GM12878 (cell line): ENCODE measurements at regions of chr12 and their contacts with region 1.

Region 1: DNA sequence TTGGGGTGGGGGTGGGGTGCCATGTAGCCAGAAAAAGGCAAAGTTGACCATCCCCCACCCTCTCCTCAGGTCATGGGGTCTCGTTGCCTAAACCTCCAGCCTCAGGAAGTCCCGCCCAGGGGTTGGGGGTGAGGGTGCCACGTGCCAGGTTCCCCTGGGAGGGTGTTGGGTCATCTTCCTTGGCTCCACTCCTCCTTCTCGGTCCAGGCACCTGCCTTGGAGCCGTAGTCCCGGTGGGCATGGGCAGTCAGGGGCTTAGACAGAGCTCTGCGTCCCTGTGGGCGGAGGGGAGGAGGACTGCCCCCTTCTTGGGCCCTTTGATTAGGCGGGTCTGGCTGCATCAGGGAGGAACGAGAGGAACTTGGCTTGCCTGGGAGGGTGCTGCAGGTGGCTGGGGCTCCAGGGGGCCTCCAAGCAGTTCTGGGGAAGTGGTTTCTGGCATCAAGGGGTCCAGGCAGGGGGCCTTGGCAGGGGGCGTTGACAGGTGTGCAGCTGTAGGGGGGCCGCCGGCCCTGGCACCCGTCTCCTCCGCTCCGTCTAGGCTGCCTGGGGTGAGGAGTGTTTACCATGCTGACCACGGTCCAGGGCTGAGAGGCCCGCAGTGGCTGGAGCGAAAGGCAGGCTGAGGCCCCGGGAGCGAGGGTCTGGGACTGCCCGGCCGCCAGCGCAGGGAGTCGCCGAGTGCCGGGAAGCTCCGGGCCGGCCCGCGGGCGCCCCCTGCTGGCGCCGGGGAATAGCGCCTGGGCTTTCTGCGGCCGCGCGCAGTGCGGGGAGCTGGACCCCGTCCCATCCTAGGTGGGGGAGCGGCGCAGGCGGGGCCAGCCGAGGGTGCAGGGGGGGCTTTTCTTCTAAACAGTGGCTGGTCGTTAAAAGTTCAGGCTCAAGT is 7.9 kb downstream of the SETD1B start:
- DNase-seq: no peak
- ATAC-seq: peak; percentile 96
- H3K4me3 ChIP-seq: peak overlapping the region; percentile 82
- H3K27ac ChIP-seq: peak overlapping the region; percentile 59; the same call in 1 of the 2 replicates
- H3K4me1 ChIP-seq: peaks cover 16% of the 10 kb centered on the region
- H3K27me3 ChIP-seq: no peaks in the 10 kb centered on the region
- CTCF ChIP-seq: peak; percentile 76 to 92 (median 88); a peak in 5 of 6 replicates
- EP300 ChIP-seq: no peak
- POLR2A ChIP-seq: no peak; the same call in 1 of the 2 replicates
- RAD21 ChIP-seq: peak; percentile 82

Region 2: DNA sequence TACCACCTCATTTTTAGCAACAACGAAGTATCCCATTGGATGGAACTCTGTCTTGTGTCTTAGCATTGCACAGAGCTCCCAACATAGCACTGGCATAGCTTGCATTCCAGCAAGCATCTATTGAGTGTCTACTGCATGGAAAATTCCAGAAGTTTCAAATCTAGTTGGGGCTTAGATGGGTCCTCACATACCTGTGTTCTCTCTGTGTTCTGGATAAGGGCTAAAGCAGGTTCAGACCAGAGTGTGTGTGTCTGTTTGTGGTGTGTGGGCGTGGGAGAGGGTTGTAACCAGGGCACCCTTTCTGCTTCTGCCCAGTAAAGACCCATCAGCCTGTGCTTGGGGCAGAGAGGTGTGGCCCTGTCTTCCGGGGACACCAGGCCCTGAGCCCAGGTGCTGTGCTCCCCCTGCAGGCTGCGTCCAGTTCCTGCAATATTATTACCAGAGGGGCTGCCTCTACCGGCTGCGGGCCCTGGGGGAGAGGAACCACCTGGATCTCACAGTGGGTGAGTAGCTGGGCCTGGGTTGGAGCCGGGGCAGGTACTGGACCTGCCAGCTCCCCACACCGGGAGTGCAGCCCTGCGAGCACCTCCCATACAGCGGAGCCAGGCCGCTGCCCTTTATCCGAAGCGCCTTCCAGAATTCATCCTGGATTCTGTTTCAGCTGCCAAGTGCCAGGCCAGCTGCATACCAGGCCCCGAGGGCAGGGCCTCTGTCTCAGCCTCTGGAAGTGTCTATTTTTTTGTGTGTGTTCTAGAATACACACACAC is 38.5 kb before region 1 on chr12:
- CTCF ChIA-PET with region 1: interaction called, 11 read pairs
- POLR2A ChIA-PET with region 1: no interaction called
- RAD21 ChIA-PET with region 1: interaction called, 3 read pairs
- SMC1A ChIA-PET with region 1: no interaction called
- in situ Hi-C with region 1: no loop called
- intact Hi-C with region 1: loop called (anchors 2 kb)
- DNase-seq: no peak
- ATAC-seq: peak; percentile 91
- H3K4me3 ChIP-seq: no peak overlapping the region
- H3K27ac ChIP-seq: no peak overlapping the region
- H3K4me1 ChIP-seq: peaks cover 7% of the 10 kb centered on the region; the same call in 1 of the 2 replicates
- H3K27me3 ChIP-seq: no peaks in the 10 kb centered on the region
- CTCF ChIP-seq: peak; percentile 92 to 95 (median 94); a peak in 5 of 6 replicates
- EP300 ChIP-seq: no peak
- POLR2A ChIP-seq: no peak
- RAD21 ChIP-seq: peak; percentile 97

Region 3: GRCh38 chr12:121786441-121786825 is 25.2 kb before region 1 on chr12:
- CTCF ChIA-PET with region 1: interaction called, 565 read pairs
- POLR2A ChIA-PET with region 1: interaction called, 155 read pairs
- RAD21 ChIA-PET with region 1: interaction called, 395 read pairs
- SMC1A ChIA-PET with region 1: interaction called, 226 read pairs
- in situ Hi-C with region 1: no loop called
- intact Hi-C with region 1: no loop called
- DNase-seq: no peak
- ATAC-seq: no peak
- H3K4me3 ChIP-seq: no peak overlapping the region
- H3K27ac ChIP-seq: peak overlapping the region; percentile 90
- H3K4me1 ChIP-seq: peaks cover 82% of the 10 kb centered on the region
- H3K27me3 ChIP-seq: no peaks in the 10 kb centered on the region
- CTCF ChIP-seq: no peak
- EP300 ChIP-seq: no peak
- POLR2A ChIP-seq: no peak
- RAD21 ChIP-seq: no peak

Region 4: GRCh38 chr12:121839106-121839992 is 27.7 kb after region 1 on chr12:
- CTCF ChIA-PET with region 1: interaction called, 15 read pairs
- POLR2A ChIA-PET with region 1: no interaction called
- RAD21 ChIA-PET with region 1: interaction called, 6 read pairs
- SMC1A ChIA-PET with region 1: interaction called, 7 read pairs
- in situ Hi-C with region 1: no loop called
- intact Hi-C with region 1: no loop called
- DNase-seq: peak; percentile 86
- ATAC-seq: peak; percentile 100
- H3K4me3 ChIP-seq: peak overlapping the region; percentile 78
- H3K27ac ChIP-seq: peak overlapping the region; percentile 58
- H3K4me1 ChIP-seq: peaks cover 3% of the 10 kb centered on the region; the same call in 1 of the 2 replicates
- H3K27me3 ChIP-seq: no peaks in the 10 kb centered on the region
- CTCF ChIP-seq: peak in 1 of 3 experiments; percentile 20; a peak in 1 of 6 replicates
- EP300 ChIP-seq: no peak
- POLR2A ChIP-seq: peak; percentile 77
- RAD21 ChIP-seq: no peak

Region 5: DNA sequence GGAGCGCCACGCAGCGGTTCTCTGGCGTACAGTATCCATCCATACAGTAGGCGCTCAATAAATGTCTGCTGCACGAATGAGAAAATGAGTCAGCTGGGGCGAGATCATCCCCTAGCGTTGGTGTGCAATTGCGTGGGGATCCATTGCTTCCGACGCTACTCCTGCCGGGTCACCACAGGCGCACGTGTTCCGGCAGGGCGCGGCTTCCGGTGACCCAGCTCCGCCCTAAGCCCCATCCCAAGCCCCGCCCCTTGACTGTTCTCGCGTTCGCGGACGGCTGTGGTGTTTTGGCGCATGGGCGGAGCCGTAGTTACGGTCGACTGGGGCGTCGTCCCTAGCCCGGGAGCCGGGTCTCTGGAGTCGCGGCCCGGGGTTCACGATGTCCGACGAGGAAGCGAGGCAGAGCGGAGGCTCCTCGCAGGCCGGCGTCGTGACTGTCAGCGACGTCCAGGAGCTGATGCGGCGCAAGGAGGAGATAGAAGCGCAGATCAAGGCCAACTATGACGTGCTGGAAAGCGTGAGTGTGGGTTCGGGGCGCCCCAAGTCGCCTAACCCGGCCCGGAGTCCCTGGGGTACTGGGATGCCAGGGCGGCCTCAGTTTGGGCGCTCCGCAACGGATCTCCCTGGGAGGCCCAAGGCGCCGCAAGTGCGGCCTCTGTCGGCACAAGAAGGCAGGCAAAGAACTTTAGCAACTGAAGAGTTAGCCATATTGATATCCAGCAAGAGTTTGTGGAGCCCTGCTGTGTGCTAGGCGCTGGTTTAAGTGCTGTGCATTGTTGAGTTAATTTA is 77.0 kb after region 1 on chr12 and contains the start of gene PSMD9:
- CTCF ChIA-PET with region 1: interaction called, 13 read pairs
- POLR2A ChIA-PET with region 1: interaction called, 5 read pairs
- RAD21 ChIA-PET with region 1: interaction called, 14 read pairs
- SMC1A ChIA-PET with region 1: interaction called, 5 read pairs
- in situ Hi-C with region 1: no loop called
- intact Hi-C with region 1: no loop called
- DNase-seq: peak; percentile 90
- ATAC-seq: peak; percentile 98
- H3K4me3 ChIP-seq: peak within 1 kb of the TSS; percentile 89
- H3K27ac ChIP-seq: peak within 1 kb of the TSS; percentile 84
- H3K4me1 ChIP-seq: peaks cover 5% of the 10 kb centered on the region; the same call in 1 of the 2 replicates
- H3K27me3 ChIP-seq: no peaks in the 10 kb centered on the region
- CTCF ChIP-seq: peak; percentile 68 to 73 (median 69)
- EP300 ChIP-seq: 0 out of 4 replicates have a peak, but pooled peaks of 1 of the 2 experiments have one; percentile 17
- POLR2A ChIP-seq: peak; percentile 98
- RAD21 ChIP-seq: peak; percentile 64
- polyA plus RNA-seq, gene PSMD9: 14.6 to 33.7 TPM

Region 6: DNA sequence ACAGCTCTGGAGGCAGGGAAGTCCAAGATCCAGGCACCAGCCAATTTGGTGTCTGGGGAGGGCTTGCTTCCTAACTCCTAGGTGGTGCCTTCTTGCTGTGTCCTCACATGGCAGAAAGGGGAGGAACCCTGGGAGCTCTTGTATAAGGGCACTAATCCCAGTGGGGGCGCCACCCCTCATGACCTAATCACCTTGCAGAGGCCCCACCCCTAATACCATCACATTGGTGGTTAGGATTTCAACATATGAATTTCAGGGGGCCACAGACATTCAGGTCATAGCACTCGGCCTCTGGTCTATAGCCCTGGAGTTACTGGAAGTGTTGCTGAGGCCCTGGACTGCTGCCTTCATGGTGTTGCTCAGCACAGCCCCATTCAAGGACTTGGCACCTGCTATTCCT is 91.5 kb after region 1 on chr12:
- CTCF ChIA-PET with region 1: no interaction called
- POLR2A ChIA-PET with region 1: no interaction called
- RAD21 ChIA-PET with region 1: no interaction called
- SMC1A ChIA-PET with region 1: no interaction called
- in situ Hi-C with region 1: no loop called
- intact Hi-C with region 1: no loop called
- DNase-seq: no peak
- ATAC-seq: no peak
- H3K4me3 ChIP-seq: no peak overlapping the region
- H3K27ac ChIP-seq: no peak overlapping the region
- H3K4me1 ChIP-seq: no peaks in the 10 kb centered on the region
- H3K27me3 ChIP-seq: no peaks in the 10 kb centered on the region
- CTCF ChIP-seq: no peak
- EP300 ChIP-seq: no peak
- POLR2A ChIP-seq: no peak
- RAD21 ChIP-seq: no peak

Region 7: GRCh38 chr12:122336015-122336946 is 524.6 kb after region 1 on chr12:
- CTCF ChIA-PET with region 1: no interaction called
- POLR2A ChIA-PET with region 1: no interaction called
- RAD21 ChIA-PET with region 1: no interaction called
- SMC1A ChIA-PET with region 1: no interaction called
- in situ Hi-C with region 1: no loop called
- intact Hi-C with region 1: no loop called
- DNase-seq: no peak
- ATAC-seq: peak; percentile 79
- H3K4me3 ChIP-seq: peak overlapping the region; percentile 62; the same call in 1 of the 2 replicates
- H3K27ac ChIP-seq: peak overlapping the region; percentile 34; the same call in 1 of the 2 replicates
- H3K4me1 ChIP-seq: no peaks in the 10 kb centered on the region
- H3K27me3 ChIP-seq: no peaks in the 10 kb centered on the region
- CTCF ChIP-seq: peak; percentile 68 to 74 (median 73)
- EP300 ChIP-seq: no peak
- POLR2A ChIP-seq: no peak
- RAD21 ChIP-seq: peak; percentile 68